A673 (cell line): ENCODE measurements at regions of chr4 and their contacts with region 1.

Region 1: GRCh38 chr4:153326513-153326912 is 18.0 kb upstream of the MND1 start:
- DNase-seq: no peak
- H3K4me3 ChIP-seq: no peak overlapping the region
- H3K27ac ChIP-seq: no peak overlapping the region
- H3K4me1 ChIP-seq: no peaks in the 10 kb centered on the region
- H3K27me3 ChIP-seq: no peaks in the 10 kb centered on the region
- CTCF ChIP-seq: no peak

Region 2: GRCh38 chr4:153281476-153281875 is 45.0 kb before region 1 on chr4:
- CTCF ChIA-PET with region 1: no interaction called
- POLR2A ChIA-PET with region 1: no interaction called
- intact Hi-C with region 1: no loop called
- DNase-seq: no peak
- H3K4me3 ChIP-seq: no peak overlapping the region
- H3K27ac ChIP-seq: peak overlapping the region; percentile 5
- H3K4me1 ChIP-seq: no peaks in the 10 kb centered on the region
- H3K27me3 ChIP-seq: no peaks in the 10 kb centered on the region
- CTCF ChIP-seq: no peak

Region 3: DNA sequence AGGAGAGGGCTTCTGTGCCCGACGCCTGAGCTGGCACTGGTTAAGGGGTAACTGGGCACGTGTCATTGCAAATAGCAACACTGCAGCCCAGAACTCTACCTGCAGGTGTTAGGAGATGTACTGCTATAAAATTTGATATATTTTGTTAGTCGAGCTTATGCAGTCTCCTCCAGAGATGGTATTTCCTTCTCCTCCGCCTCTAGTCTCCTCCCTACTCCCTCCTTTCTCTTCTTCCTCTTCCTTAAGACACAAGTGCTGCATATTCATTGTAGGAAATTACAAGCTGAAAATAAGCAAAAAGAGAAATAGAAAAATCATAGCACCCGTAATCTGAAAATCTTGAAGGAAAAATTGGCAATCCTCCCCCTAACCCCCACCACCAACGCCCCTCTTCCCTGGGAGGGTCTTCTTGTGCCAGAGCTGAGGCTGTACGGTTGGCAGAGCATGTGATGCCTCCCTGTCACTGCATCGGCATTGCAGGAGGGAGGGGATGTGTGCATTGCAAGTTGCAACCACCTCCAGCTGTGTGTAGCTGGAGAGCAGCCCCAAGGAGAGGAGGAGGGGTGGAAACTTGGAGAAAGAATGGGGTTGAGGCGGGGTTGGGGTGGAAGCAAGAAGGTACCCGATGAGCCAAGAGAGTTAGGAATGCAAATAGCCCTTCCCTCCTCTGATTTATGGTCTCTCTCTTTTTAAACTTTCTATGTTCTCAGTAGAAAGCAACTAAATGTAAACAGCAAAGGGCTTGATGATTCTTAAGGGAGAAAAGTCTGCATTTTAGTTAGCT is 30.3 kb before region 1 on chr4:
- CTCF ChIA-PET with region 1: no interaction called
- POLR2A ChIA-PET with region 1: interaction called, 13 read pairs
- intact Hi-C with region 1: no loop called
- DNase-seq: peak; percentile 19
- H3K4me3 ChIP-seq: no peak overlapping the region
- H3K27ac ChIP-seq: no peak overlapping the region
- H3K4me1 ChIP-seq: peaks cover 8% of the 10 kb centered on the region
- H3K27me3 ChIP-seq: no peaks in the 10 kb centered on the region
- CTCF ChIP-seq: no peak

Region 4: DNA sequence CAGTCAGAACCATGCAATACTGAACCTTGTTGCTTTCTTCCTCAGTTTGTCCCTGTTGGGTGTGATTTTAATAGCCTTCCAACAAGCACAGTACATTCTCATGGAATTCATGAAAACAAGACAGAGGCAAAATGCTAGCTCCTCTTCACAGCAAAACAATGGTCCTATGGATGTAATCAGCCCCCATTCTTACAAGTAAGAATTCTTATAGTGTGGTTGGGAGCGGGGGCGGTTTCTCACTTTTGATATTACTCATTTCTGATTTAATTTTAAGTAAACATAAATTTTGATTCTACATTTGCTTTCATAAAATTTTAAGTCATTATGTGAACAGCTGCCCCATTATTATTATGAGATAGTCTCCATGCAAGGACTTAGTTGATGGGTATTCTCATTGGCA is 276.7 kb after region 1 on chr4:
- CTCF ChIA-PET with region 1: no interaction called
- POLR2A ChIA-PET with region 1: no interaction called
- intact Hi-C with region 1: no loop called
- DNase-seq: no peak
- H3K4me3 ChIP-seq: no peak overlapping the region
- H3K27ac ChIP-seq: no peak overlapping the region
- H3K4me1 ChIP-seq: no peaks in the 10 kb centered on the region
- H3K27me3 ChIP-seq: no peaks in the 10 kb centered on the region
- CTCF ChIP-seq: no peak